Left cardiac atrium (tissue), 4 donors: ENCODE measurements at regions of chr12 and their contacts with region 1.

Region 1: GRCh38 chr12:2034633-2035430 is 18.0 kb upstream of the CACNA1C start:
- DNase-seq: peak; percentile 94
- ATAC-seq: peak; percentile 94 to 95

Region 2: GRCh38 chr12:1795785-1796514 is 238.9 kb before region 1 on chr12:
- intact Hi-C with region 1: loop called (anchors 10 kb)
- DNase-seq: peak; percentile 96
- ATAC-seq: peak; percentile 95 to 97

Region 3: DNA sequence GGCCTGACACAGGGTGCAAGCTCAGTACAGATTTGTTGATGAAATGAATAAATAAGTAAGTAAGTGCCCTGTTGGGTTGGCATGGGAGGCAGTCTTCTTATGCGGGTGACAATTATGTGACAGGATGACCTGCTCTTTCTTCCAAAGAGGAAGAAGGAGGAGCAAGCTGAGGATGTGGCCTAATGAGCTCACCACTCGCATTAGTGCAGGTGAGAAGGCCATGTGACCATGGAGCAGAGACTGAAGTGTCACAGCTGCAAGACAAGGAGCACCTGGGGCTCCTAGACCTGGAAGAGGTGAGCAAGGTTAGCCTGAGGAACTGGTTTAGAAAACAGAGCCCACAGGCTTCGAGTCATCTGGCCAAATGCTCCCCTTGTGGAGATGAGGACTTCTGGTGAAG is 179.6 kb before region 1 on chr12:
- intact Hi-C with region 1: no loop called
- DNase-seq: no peak
- ATAC-seq: no peak

Region 4: DNA sequence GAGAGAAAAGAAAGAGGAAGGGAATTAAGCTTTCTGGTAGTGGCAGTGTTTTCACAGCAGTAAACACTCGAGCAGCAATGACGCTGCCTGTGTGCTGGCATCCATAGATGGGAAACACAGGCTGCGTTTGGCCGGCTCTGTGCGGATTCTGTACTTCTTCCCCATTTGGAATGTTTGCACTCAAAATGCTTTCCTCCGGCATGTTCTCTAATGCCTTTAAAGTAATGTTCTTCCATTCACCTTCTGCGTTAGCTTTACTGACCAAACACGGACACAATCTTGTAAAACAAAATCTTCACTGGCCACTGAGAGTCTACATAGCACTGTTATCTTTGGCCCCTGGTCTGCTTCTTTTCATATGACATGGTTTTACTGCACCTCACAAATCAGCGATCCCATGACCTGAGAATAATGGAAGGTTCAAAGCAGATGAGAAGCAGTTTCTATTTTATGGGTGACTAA is 61.9 kb before region 1 on chr12:
- intact Hi-C with region 1: loop called in 1 of 2 experiments (anchors 5 kb)
- DNase-seq: peak; percentile 50
- ATAC-seq: peak; percentile 64 to 68

Region 5: DNA sequence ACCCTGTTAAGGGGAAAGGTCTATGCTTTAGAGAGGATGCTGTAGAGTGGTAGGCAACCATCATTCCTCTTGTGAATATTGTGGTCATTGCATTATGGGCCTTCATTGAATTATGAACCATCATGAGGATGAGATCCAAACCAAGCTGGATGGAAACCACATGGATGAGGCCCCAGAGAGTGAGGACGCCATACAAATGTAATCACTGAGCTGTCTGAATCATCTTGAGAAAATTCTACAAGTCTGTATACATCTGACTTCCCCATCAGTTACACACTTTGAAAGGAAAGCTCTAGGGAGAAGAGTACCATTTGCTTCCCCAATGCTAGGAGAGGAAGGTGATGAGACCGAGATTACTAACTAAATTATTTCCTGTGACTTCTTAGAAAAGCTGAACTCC is 190.9 kb after region 1 on chr12:
- intact Hi-C with region 1: no loop called
- DNase-seq: no peak
- ATAC-seq: no peak

Region 6: GRCh38 chr12:2583091-2583497 is 548.3 kb after region 1 on chr12:
- intact Hi-C with region 1: loop called in 1 of 2 experiments (anchors 10 kb)
- DNase-seq: peak; percentile 76
- ATAC-seq: peak; percentile 92 to 96